Activated CD8-positive, alpha-beta memory T cell treated with anti-CD3 and anti-CD28 coated beads, Interleukin-2, amount 10 ng/mL, durations not matched to agents 7 days and 5 days (primary cell): ENCODE measurements at regions of chr17 and their contacts with region 1.

Region 1: DNA sequence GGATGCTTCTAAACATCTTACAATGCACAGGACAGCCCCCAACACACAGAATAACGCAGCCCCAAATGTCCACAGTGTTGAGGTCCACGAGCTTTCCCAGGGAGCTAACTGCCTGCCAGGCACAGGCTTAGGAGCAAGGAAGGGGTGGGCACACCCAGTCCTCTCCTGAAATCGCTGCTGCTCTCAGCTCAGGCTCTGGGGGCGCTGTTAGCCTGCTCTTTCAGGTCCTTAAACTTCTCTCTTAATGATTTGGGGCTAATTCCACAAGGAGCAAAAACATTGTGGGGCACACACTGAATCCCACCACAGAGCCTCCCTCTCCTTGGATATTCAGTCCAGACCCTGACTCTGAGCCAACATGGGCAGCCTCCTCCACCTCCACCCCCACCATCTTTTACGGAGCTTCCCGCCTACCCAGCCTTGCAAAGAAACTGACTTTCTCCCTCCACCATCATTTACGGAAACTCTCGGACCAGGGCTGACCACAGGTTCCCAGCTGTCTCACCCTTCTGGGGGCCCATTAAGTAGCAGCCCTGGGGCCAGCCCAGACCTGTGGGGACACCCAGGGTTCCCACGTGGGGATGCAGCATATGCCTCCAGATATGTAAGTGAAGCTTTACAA is 1.1 kb downstream of the CD300H start:
- DNase-seq: peak; percentile 53
- ATAC-seq: peak; percentile 45
- H3K4me3 Mint-ChIP-seq: no peak overlapping the region
- H3K27ac Mint-ChIP-seq: no peak overlapping the region
- H3K4me1 Mint-ChIP-seq: peaks cover 10% of the 10 kb centered on the region
- H3K27me3 Mint-ChIP-seq: peaks cover 43% of the 10 kb centered on the region

Region 2: GRCh38 chr17:74555427-74555940 is 10.8 kb before region 1 on chr17:
- CTCF ChIA-PET with region 1: interaction called, 15 read pairs
- DNase-seq: no peak
- ATAC-seq: no peak
- H3K4me3 Mint-ChIP-seq: no peak overlapping the region
- H3K27ac Mint-ChIP-seq: no peak overlapping the region
- H3K4me1 Mint-ChIP-seq: peaks cover 6% of the 10 kb centered on the region
- H3K27me3 Mint-ChIP-seq: peaks cover 11% of the 10 kb centered on the region

Region 3: DNA sequence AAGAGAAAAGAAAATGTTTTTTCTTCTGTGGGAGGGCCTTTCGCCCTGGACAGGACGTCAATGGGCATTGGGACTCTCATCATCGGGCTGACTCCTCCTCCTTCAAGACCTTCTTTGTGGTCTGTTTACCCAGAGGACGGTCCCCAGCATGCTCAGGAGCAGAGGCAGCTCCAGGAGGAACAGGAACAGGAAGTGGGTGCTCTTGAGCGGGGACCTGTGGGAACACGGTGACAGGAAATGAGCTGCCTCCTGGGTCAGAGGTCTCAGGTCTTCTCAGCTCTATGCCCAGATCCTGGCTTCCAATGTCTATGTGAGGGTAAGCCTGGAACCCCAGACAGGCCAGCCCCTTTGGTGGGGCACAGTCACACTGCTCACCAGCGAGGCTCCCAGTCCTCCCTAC is 13.7 kb after region 1 on chr17:
- CTCF ChIA-PET with region 1: interaction called, 13 read pairs
- DNase-seq: no peak
- ATAC-seq: no peak
- H3K4me3 Mint-ChIP-seq: no peak overlapping the region
- H3K27ac Mint-ChIP-seq: no peak overlapping the region
- H3K4me1 Mint-ChIP-seq: peaks cover 14% of the 10 kb centered on the region
- H3K27me3 Mint-ChIP-seq: peaks cover 17% of the 10 kb centered on the region

Region 4: DNA sequence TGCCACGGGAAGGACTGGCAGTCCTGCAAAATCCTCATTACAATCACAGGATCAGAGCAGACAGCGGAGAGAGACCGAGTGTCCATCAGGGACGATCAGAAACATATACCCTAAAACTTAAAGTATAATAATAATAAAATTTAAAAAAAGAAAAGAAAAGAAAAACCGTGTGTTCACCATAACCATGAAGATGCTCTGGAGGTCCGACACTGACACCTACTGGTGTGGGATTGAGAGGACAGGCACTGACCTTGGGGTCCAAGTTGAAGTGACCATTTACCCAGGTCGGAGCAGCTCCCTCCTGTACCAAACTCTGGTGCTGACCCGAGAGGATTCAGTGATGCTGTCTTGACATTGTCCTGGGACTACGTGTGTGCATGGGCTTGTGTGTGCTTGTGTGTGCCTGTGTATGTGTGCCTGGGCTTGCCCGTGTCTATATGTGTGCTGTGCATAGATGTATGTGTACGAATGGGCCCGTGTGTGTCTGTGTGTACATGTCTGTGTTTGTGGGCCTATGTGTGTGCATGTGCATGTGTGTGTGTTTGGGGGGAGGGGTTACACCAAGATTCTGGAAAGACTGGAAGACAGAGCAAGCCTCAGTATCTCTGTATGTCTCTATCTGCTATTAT is 35.8 kb after region 1 on chr17:
- CTCF ChIA-PET with region 1: interaction called, 15 read pairs
- DNase-seq: peak; percentile 61
- ATAC-seq: peak; percentile 40
- H3K4me3 Mint-ChIP-seq: no peak overlapping the region
- H3K27ac Mint-ChIP-seq: no peak overlapping the region
- H3K4me1 Mint-ChIP-seq: peaks cover 30% of the 10 kb centered on the region
- H3K27me3 Mint-ChIP-seq: peaks cover 51% of the 10 kb centered on the region